Breast epithelium (tissue), 4 donors: ENCODE measurements at regions of chr3 and their contacts with region 1.

Region 1: GRCh38 chr3:177359593-177360357 is 162.5 kb upstream of the TBL1XR1 start:
- DNase-seq: peak; percentile 93 to 96
- H3K4me3 ChIP-seq: peak overlapping the region; percentile 33 to 60 (median 44)
- H3K27ac ChIP-seq: peak overlapping the region; percentile 92
- H3K4me1 ChIP-seq: peaks cover 10% of the 10 kb centered on the region in 2 donors
- H3K27me3 ChIP-seq: no peaks in the 10 kb centered on the region
- CTCF ChIP-seq: peak in 1 of 3 donors; percentile 5
- POLR2A ChIP-seq: no peak

Region 2: GRCh38 chr3:177197041-177197727 is 162.6 kb before region 1 on chr3 and contains the start of gene TBL1XR1:
- intact Hi-C with region 1: loop called (anchors 5 kb)
- DNase-seq: peak; percentile 90
- H3K4me3 ChIP-seq: peak within 1 kb of the TSS; percentile 93 to 98 (median 97)
- H3K27ac ChIP-seq: peak within 1 kb of the TSS; percentile 99 to 100
- H3K4me1 ChIP-seq: no peaks in the 10 kb centered on the region
- H3K27me3 ChIP-seq: no peaks in the 10 kb centered on the region
- CTCF ChIP-seq: no peak
- POLR2A ChIP-seq: no peak
- total RNA-seq, gene TBL1XR1: 92.8 to 147 (median 111) TPM

Region 3: DNA sequence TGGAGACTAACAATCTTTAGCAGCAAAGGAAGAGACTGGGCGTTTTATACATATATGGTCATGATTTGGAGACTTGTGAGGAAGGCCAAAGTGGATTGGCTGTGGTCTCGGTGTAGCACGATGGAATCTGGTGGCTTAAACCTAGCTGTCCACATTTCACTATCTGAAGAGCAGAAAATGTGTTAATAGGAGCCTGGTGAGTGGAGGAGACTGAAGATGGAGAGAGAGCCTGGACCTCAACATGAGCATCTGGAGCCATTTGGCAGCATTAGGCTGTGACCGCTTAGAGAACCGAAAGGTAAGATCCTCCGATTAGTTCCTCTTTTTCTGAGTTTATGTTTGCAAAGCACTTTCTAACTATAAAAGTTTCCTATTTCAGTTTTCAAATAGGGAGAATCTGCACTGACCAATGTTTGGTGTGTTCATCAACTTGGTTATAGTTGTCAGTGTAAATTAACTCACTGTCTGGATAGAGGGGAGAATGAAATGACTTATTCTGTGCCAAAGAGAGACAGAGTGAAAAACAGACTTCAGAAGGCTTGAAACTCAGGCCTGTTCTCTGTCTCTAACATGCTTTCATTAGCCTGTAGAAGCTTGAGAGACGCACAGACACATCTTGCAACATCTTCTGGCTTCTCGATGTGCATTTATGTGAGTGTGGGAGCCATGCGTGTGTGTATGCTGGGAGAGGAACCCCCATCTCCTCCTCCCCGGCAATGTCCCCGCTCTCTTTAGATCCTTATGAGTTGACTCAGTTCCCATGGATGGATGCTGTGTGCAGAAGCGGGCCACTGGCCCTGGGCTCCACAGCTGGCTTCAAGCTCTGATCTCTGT is 82.3 kb after region 1 on chr3:
- intact Hi-C with region 1: no loop called
- DNase-seq: no peak
- H3K4me3 ChIP-seq: no peak overlapping the region
- H3K27ac ChIP-seq: peak overlapping the region; percentile 48 to 70
- H3K4me1 ChIP-seq: peaks cover 3 to 4% of the 10 kb centered on the region in 2 donors
- H3K27me3 ChIP-seq: no peaks in the 10 kb centered on the region
- CTCF ChIP-seq: no peak
- POLR2A ChIP-seq: no peak